Activated CD4-positive, alpha-beta T cell treated with anti-CD3 and anti-CD28 coated beads for 36 hours (primary cell): ENCODE measurements at regions of chr10 and their contacts with region 1.

Region 1: DNA sequence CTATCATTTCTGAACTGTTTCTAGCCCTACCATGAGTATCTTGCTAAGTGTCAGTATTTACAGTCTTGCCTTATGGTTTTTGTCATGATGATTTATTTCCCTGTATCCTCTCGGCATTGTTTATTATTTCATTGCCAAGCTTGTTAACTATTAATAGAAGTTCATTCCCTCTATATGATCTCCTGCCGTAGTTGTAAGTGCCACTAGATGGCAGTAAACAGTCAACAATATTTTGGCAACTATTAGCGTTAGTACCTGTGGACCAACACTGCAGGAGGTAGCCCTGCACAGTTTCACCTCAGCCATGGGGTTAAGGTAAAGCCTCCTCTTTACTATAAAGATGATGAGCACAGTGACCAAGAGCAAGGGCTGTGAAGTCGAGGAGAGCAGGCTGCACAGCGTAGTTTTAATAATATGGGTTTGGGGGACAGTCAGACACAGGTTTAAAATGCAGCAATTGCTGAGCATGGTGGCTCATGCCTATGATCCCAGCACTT is 26.1 kb upstream of the CCNJ start:
- DNase-seq: peak; percentile 39
- ATAC-seq: peak; percentile 92
- H3K4me3 Mint-ChIP-seq: no peak overlapping the region
- H3K27ac Mint-ChIP-seq: no peak overlapping the region
- H3K4me1 Mint-ChIP-seq: no peaks in the 10 kb centered on the region
- H3K27me3 Mint-ChIP-seq: no peaks in the 10 kb centered on the region

Region 2: GRCh38 chr10:95266674-95267095 is 750.6 kb before region 1 on chr10:
- CTCF ChIA-PET with region 1: no interaction called
- POLR2A ChIA-PET with region 1: no interaction called
- intact Hi-C with region 1: no loop called
- DNase-seq: no peak
- ATAC-seq: no peak
- H3K4me3 Mint-ChIP-seq: no peak overlapping the region
- H3K27ac Mint-ChIP-seq: no peak overlapping the region
- H3K4me1 Mint-ChIP-seq: peaks cover 3% of the 10 kb centered on the region
- H3K27me3 Mint-ChIP-seq: peaks cover 3% of the 10 kb centered on the region

Region 3: DNA sequence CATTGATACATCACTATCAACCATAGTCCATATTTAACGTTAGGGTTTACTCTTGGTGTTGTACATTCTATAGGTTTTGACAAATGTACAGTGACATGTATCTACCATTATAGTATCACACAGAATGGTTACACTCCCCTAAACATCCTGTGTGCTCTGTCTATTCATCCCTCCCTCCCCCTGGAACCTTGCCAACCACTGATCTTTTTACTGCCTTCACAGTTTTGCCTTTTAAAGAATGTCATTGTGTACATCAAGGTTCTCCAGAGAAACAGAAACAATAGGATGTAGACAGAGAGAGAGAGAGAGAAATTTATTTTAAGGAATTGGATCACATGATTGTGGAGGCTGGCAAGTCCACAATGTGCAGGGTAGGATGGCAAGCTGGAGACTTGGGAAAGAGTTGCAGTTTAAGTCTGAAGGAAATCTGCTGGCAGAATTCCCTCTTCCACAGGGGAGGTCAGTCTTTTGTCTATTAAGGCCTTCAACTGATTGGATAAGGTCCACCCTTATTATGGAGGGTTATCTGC is 18.9 kb before region 1 on chr10:
- CTCF ChIA-PET with region 1: interaction called, 12 read pairs
- POLR2A ChIA-PET with region 1: no interaction called
- intact Hi-C with region 1: no loop called
- DNase-seq: no peak
- ATAC-seq: no peak
- H3K4me3 Mint-ChIP-seq: no peak overlapping the region
- H3K27ac Mint-ChIP-seq: no peak overlapping the region
- H3K4me1 Mint-ChIP-seq: no peaks in the 10 kb centered on the region
- H3K27me3 Mint-ChIP-seq: no peaks in the 10 kb centered on the region

Region 4: DNA sequence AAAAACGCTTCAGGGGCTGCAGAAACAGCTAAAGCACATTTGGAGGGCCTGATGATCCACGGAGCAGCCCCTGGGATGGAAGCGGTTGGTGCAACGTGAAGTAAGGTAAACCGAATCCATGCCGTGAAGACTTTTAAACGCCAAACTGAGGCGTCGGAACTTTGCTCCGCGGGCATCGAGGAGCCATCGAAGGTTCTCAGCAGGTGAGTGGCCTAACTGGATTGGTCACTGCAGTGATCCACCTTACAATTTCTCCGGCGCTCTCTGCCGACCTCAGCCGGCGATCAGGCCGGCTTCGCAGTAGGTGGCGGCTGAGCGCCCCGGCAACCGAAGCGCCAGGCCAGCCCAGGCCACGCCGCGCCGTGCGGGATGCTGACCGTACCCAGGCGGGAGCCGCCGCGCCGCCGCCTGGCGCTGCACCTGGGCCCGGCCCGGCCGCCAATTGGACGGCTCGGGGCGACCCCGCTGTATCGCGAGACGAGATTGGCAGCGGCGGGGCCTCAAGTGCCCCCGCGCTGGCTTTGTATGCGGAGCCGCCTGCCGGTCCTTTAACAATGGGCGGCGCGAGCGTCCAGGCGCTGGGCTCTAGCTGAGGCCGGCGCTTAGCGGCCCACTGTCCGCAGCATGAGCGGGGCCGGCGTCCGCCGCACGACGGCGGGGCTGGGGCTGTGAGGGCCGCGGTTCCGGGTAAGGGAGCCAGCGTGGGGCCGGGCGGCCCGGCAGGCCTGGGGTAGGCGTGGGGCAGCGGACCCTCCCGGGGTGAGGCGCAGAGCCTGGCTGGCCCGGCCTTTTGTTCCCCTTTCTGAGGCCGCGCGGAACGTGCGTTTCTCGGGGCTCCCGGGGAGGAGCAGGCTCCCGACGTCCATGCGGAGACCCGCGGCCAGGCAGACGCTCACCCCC is 26.0 kb after region 1 on chr10 and contains the start of gene CCNJ:
- CTCF ChIA-PET with region 1: interaction called, 11 read pairs
- POLR2A ChIA-PET with region 1: no interaction called
- intact Hi-C with region 1: no loop called
- DNase-seq: peak; percentile 90
- ATAC-seq: peak; percentile 93
- H3K4me3 Mint-ChIP-seq: peak within 1 kb of the TSS; percentile 93
- H3K27ac Mint-ChIP-seq: peak within 1 kb of the TSS; percentile 79
- H3K4me1 Mint-ChIP-seq: peaks cover 39% of the 10 kb centered on the region
- H3K27me3 Mint-ChIP-seq: no peaks in the 10 kb centered on the region
- total RNA-seq, gene CCNJ: 4.4 to 4.5 TPM

Region 5: GRCh38 chr10:96292971-96293920 is 276.0 kb after region 1 on chr10:
- CTCF ChIA-PET with region 1: interaction called, 17 read pairs
- POLR2A ChIA-PET with region 1: no interaction called
- intact Hi-C with region 1: loop called (anchors 1 kb)
- DNase-seq: peak; percentile 36
- ATAC-seq: peak; percentile 84
- H3K4me3 Mint-ChIP-seq: no peak overlapping the region
- H3K27ac Mint-ChIP-seq: no peak overlapping the region
- H3K4me1 Mint-ChIP-seq: peaks cover 26% of the 10 kb centered on the region
- H3K27me3 Mint-ChIP-seq: no peaks in the 10 kb centered on the region

Region 6: GRCh38 chr10:96334616-96335526 is 317.6 kb after region 1 on chr10:
- CTCF ChIA-PET with region 1: interaction called, 13 read pairs
- POLR2A ChIA-PET with region 1: no interaction called
- intact Hi-C with region 1: loop called (anchors 1 kb)
- DNase-seq: peak; percentile 12
- ATAC-seq: no peak
- H3K4me3 Mint-ChIP-seq: no peak overlapping the region
- H3K27ac Mint-ChIP-seq: no peak overlapping the region
- H3K4me1 Mint-ChIP-seq: peaks cover 21% of the 10 kb centered on the region
- H3K27me3 Mint-ChIP-seq: peaks cover 4% of the 10 kb centered on the region

Region 7: DNA sequence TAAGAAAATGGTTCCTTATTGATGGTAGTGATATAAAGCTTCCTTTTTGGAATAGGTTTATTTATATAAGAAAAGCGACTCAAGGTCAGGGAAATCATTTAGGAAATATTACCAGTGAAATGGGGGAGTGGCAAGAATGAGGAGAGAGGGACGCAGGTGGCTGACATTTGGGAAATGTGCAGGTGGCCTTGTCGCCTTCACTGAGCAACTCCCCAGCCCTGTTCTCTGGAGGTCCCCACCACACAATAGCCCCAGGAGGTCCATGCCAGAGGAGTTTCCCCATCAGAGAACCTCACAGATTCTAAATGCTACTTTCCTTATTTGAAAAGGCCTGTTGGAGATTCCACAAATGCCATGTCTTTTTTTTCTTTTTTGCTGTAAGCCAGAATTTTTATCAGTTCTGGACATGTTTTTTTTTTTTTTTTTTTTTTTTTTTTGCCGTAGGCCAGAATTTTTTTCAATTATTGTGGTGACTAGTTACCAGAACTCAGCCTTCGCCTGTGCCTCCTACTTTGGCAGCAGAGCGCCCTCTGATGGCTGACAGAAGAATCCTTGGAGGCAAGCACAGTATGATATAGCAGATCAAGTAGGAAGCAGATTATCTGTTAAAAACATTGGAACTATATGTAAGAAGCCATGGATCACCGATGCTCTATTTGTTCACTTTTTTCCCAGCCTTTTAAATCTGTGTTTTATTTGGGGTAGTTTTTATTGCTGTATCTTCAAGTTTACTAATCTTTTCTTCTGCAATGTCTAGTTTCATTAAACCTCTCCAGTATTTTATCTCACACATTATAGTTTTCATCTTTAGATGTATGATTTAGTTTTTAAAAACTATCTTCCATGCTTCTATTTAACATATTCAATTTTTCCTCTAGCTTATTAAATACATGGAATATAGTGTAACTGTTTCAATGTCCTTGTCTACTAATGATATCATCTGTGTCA is 323.0 kb after region 1 on chr10:
- CTCF ChIA-PET with region 1: interaction called, 13 read pairs
- POLR2A ChIA-PET with region 1: no interaction called
- intact Hi-C with region 1: loop called (anchors 1 kb)
- DNase-seq: peak; percentile 83
- ATAC-seq: peak; percentile 77
- H3K4me3 Mint-ChIP-seq: no peak overlapping the region
- H3K27ac Mint-ChIP-seq: no peak overlapping the region
- H3K4me1 Mint-ChIP-seq: peaks cover 9% of the 10 kb centered on the region
- H3K27me3 Mint-ChIP-seq: peaks cover 6% of the 10 kb centered on the region